ENCODE measurements at regions of chr12 and their contacts with region 1.

Region 1: DNA sequence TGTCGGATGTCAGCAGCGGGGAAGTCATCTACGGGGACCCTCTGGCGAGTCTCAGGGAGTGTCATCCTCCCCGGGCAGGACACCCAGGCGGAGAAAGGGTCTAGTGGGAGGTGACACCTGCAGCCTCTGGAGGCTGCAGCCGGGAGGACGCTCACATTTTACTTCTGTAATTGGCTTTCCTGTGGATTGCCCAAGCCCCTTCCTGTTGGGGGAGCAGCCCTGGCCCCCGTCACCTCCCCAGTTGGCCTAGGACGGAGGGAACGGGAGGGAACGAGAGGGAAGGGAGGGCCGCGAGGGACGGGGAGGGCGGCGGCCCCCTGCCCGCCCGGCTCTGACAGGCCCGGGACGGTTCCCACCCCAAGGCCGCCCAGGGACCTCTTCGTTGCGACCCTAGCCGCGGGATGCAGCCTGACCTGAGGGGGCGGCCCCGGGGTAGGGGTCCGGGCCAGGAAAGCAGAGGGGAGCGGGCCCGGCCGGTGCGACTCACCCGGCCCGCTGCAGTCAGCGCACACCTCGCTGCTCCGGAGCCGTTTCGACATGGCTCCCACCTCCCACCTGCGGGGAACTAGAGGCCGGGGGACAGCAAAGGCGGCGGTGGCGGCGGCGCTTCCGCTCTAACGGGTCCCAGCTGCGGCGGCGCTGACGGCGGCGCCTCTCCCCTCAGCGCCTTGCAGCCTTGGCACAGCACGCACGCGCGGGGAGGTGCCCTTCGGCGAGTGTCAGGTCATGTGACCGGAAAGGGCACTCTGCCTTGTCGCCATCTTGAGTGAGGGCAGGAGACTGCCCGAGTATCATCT is at the start of gene GIT2:
- DNase-seq: peak; percentile 94
- H3K4me3 Mint-ChIP-seq: peak within 1 kb of the TSS; percentile 98
- H3K27ac Mint-ChIP-seq: peak within 1 kb of the TSS; percentile 91
- H3K4me1 Mint-ChIP-seq: peaks cover 49% of the 10 kb centered on the region
- H3K27me3 Mint-ChIP-seq: no peaks in the 10 kb centered on the region
- total RNA-seq, gene GIT2: 71.1 and 72.3 TPM in 2 replicates

Region 2: DNA sequence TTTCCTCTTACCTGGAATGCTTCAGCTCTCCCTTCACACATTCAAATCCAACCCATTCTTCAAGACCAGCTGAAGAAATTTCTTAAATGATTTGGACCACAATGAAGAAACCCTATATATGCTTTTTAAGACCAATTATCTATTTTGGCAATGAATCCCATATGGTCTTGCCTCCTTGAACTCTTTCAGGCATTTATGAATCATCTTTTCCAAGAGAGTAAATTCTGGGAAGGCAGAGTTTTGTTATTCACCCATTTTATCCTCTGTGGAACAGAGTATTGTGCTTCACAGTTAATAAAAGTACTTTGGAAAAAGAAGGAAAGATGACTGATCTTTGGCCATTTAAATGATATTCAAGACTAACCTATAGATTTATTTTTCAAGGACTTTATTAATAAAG is 13.7 kb before region 1 on chr12:
- intact Hi-C with region 1: loop called (anchors 1 kb)
- DNase-seq: no peak
- H3K4me3 Mint-ChIP-seq: peak overlapping the region; percentile 9
- H3K27ac Mint-ChIP-seq: peak overlapping the region; percentile 87
- H3K4me1 Mint-ChIP-seq: peaks cover 53% of the 10 kb centered on the region
- H3K27me3 Mint-ChIP-seq: no peaks in the 10 kb centered on the region

Region 3: DNA sequence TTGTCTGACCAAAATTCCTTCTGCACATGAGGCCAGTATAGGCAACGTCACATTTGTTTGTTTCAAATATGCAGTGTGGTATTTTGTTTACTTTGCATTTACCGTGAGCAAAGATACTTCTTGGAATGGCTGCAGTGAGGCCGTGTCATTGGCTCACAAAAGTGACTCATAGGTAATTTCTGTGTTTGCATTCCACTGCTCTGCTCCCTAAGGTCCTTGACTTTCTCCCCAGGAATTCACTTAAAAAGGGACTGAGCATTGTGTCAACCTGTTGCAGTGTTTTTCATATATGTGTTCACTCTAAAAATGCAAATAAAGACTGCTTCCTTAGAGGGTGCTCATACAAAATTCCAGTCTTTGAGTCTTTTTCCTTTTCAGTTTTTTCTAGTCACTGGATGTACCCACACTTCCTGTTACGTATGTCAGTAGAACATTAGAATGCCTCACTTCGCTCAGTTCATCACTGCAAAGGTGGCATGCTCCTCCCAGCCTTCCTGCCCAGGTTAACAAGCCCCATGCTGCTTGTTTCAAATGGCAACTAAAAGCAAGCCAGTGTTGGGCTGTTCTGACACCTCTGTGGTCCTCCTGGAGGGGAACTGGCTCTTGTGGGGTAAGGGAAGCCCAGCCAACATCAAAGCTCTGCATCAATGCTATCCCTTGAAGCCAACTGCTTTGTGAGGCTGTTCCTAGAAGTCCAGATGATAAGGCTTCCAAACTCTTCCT is 43.4 kb after region 1 on chr12:
- intact Hi-C with region 1: loop called (anchors 5 kb)
- DNase-seq: no peak
- H3K4me3 Mint-ChIP-seq: no peak overlapping the region
- H3K27ac Mint-ChIP-seq: peak overlapping the region; percentile 92
- H3K4me1 Mint-ChIP-seq: peaks cover 49% of the 10 kb centered on the region
- H3K27me3 Mint-ChIP-seq: no peaks in the 10 kb centered on the region

Region 4: DNA sequence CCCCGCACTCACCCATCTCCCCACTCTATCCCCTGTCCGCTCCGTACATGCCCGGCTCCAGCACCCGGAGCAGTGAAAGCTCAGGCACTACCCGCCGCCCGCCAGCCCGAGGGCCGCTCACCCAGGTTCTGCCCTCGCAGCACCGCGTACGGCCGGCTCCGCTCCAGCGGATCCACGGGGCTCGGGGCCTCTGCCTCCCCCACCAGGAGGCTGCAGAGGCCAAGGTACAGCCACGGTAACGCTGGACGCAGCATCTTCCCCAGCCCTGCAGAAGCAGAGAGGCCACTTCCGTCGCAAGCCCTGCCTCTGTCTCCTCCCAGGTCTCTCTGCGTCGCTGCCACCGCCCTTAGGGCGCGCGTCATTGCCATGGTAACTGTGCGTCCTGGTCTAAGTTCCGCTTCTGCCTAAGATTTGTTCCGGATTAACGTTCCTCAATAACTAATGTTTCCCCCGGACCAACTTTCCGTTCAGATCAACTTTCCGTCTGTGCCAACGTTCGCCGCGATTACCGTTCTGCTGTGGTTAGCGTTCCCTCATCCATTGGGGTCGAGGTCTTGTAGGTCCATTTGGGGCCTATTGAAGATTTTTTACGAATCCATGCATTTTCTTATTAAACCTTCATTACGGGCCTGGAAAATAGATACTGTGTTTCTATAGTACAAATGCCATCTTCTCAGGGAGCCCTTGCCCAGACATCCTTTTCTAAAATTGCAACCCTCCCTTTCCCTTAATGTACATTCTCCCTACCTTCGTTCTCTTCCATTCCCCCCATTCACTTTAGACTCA is 52.6 kb after region 1 on chr12 and contains the start of gene C12orf76:
- intact Hi-C with region 1: loop called (anchors 5 kb)
- DNase-seq: peak; percentile 90
- H3K4me3 Mint-ChIP-seq: peak within 1 kb of the TSS; percentile 89
- H3K27ac Mint-ChIP-seq: peak within 1 kb of the TSS; percentile 96
- H3K4me1 Mint-ChIP-seq: peaks cover 35% of the 10 kb centered on the region
- H3K27me3 Mint-ChIP-seq: no peaks in the 10 kb centered on the region
- total RNA-seq, gene C12orf76: 24.8 and 25.2 TPM in 2 replicates